Aorta (tissue), 5 donors: ENCODE measurements at regions of chr11 and their contacts with region 1.

Region 1: GRCh38 chr11:124108156-124108555 is 7.1 kb upstream of the VWA5A start:
- DNase-seq: peak in 1 of 2 donors; percentile 48
- ATAC-seq: no peak
- H3K4me3 ChIP-seq: no peak overlapping the region
- H3K27ac ChIP-seq: no peak overlapping the region
- H3K4me1 ChIP-seq: no peaks in the 10 kb centered on the region
- H3K27me3 ChIP-seq: no peaks in the 10 kb centered on the region

Region 2: GRCh38 chr11:123899792-123900191 is 208.4 kb before region 1 on chr11:
- intact Hi-C with region 1: no loop called
- DNase-seq: no peak
- ATAC-seq: peak; percentile 38
- H3K4me3 ChIP-seq: no peak overlapping the region
- H3K27ac ChIP-seq: no peak overlapping the region
- H3K4me1 ChIP-seq: no peaks in the 10 kb centered on the region
- H3K27me3 ChIP-seq: peaks cover 0 to 2% of the 10 kb centered on the region in 2 donors

Region 3: GRCh38 chr11:124147951-124148350 is 39.8 kb after region 1 on chr11:
- intact Hi-C with region 1: no loop called
- DNase-seq: no peak
- ATAC-seq: no peak
- H3K4me3 ChIP-seq: no peak overlapping the region
- H3K27ac ChIP-seq: no peak overlapping the region
- H3K4me1 ChIP-seq: no peaks in the 10 kb centered on the region
- H3K27me3 ChIP-seq: no peaks in the 10 kb centered on the region

Region 4: GRCh38 chr11:124194698-124195410 is 86.7 kb after region 1 on chr11:
- intact Hi-C with region 1: loop called in 1 of 2 experiments (anchors 2 kb)
- DNase-seq: peak in 1 of 2 donors; percentile 77
- ATAC-seq: peak; percentile 85
- H3K4me3 ChIP-seq: no peak overlapping the region
- H3K27ac ChIP-seq: peak overlapping the region; percentile 3 to 64
- H3K4me1 ChIP-seq: peaks cover 0 to 3% of the 10 kb centered on the region in 2 donors
- H3K27me3 ChIP-seq: no peaks in the 10 kb centered on the region

Region 5: DNA sequence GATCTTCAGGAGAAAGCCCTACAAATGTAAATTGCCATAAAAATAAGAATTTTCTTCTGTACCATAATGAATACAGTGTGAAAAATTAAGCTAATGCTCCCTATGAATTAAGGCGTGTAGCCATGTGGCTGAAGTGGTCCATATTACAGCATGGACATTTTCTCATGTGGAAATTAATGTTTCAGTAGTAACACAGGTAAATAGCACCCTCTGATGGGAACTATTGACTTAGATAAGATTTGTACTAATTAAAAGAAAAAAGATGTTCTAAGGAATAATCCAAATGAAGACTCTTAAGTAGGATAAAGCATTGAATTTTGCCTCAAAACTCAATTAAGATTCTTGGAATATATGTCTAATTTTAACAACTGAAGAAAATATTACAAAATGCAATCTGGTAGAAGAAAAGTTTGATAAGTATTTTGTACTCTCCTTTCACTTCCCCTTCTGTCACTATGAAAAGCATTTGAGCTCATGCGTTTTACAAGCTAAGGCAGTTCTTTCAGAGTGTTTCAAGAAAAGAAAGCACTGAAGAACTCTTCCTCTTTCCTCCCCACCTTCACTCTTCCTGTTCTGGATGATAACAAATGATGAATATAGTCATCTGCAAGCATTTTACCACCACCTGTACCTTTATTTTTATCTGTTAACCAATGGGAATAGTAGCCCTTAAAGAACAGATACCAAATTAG is 221.8 kb after region 1 on chr11:
- intact Hi-C with region 1: loop called in 1 of 2 experiments (anchors 10 kb)
- DNase-seq: no peak
- ATAC-seq: no peak
- H3K4me3 ChIP-seq: no peak overlapping the region
- H3K27ac ChIP-seq: no peak overlapping the region
- H3K4me1 ChIP-seq: no peaks in the 10 kb centered on the region
- H3K27me3 ChIP-seq: no peaks in the 10 kb centered on the region

Region 6: GRCh38 chr11:124900464-124900863 is 792.3 kb after region 1 on chr11:
- intact Hi-C with region 1: no loop called
- DNase-seq: no peak
- ATAC-seq: peak; percentile 50
- H3K4me3 ChIP-seq: no peak overlapping the region
- H3K27ac ChIP-seq: no peak overlapping the region
- H3K4me1 ChIP-seq: no peaks in the 10 kb centered on the region
- H3K27me3 ChIP-seq: no peaks in the 10 kb centered on the region

Region 7: DNA sequence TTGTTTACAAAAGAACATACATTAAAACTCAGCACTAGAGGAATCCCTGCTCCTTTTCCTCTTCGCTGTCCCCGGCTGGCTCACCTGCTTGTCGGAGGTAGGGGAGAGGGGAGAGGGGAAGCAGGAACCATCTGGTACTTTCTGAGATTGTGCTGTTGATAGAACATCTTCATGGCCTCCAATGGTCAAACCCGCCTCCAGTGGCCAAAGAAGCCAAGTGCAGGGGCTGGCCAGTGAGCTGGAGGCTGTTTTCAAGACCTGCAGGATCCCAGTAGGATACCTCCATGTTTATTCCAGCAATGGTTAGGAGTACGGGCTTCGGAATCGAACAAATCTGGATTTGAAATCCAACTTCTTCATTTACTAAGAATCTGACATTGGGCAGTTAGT is 1149.0 kb after region 1 on chr11:
- intact Hi-C with region 1: no loop called
- DNase-seq: peak in 1 of 2 donors; percentile 14
- ATAC-seq: no peak
- H3K4me3 ChIP-seq: no peak overlapping the region
- H3K27ac ChIP-seq: no peak overlapping the region
- H3K4me1 ChIP-seq: no peaks in the 10 kb centered on the region
- H3K27me3 ChIP-seq: no peaks in the 10 kb centered on the region